ENCODE measurements at regions of chr21 and their contacts with region 1.

Region 1: GRCh38 chr21:46411236-46411635 is 47.5 kb upstream of the DIP2A start:
- DNase-seq: no peak
- ATAC-seq: no peak

Region 2: DNA sequence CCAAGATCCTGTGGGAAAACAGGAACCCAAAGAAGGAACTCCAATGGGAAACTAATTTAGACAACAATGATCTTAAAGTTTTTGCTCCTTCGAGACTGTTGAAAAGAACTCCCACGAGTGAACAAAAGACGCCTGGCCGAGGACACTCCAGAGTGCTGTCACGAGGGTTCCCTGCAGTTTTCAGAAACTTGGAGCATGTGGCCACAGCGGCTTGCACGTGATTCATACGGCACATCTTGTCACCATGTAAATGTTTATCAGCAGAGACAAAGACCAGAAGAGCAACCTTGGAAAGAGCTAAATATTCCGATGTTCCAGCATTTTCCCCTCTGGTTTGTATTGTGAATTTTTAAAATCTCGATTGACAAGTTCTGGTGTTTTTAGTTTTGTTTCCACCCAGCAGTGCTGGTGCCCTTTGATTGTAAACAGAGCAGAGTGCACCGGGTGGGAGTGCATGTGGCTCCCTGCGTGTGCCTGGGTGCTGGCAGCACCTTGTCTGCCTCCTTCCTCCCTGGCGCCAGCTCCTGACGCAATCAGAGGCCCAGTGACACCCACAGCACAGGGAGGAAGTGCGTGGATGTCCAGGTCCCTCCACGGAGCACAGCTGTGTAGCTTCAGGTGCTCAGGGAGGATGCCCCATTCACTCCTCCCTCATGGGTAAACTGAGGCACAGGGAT is 1933.0 kb before region 1 on chr21:
- intact Hi-C with region 1: loop called (anchors 5 kb)
- DNase-seq: no peak
- ATAC-seq: no peak